ENCODE measurements at regions of chr11 and their contacts with region 1.

Region 1: GRCh38 chr11:34512840-34513681 is 533 bp downstream of the ELF5 start:
- DNase-seq: no peak

Region 2: GRCh38 chr11:34185926-34186841 is 326.9 kb before region 1 on chr11:
- in situ Hi-C with region 1: loop called (anchors 10 kb)
- DNase-seq: no peak

Region 3: DNA sequence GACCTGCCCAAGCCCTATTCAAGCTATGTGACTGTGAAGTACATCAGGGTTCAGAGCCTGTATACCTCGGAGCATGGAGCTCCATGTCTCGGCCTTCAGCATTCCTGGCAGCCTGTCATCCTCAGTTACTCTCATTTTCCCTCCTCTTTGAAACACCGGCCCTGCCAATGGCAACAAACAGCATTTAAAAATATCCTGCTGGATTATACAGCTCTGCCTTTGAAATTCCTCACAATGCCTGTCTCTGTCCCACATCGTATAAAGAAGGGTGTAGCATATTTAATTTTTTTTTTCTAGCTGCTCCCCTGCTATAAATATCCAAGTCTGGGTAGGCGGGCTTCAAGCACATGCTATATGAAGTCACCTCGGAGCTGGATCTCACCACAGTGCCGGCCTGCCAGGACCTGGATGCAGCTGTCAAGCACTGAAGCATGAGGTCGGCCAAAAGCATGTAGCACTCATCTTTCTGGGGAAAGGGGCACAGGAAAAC is 167.0 kb before region 1 on chr11:
- in situ Hi-C with region 1: no loop called
- DNase-seq: no peak

Region 4: DNA sequence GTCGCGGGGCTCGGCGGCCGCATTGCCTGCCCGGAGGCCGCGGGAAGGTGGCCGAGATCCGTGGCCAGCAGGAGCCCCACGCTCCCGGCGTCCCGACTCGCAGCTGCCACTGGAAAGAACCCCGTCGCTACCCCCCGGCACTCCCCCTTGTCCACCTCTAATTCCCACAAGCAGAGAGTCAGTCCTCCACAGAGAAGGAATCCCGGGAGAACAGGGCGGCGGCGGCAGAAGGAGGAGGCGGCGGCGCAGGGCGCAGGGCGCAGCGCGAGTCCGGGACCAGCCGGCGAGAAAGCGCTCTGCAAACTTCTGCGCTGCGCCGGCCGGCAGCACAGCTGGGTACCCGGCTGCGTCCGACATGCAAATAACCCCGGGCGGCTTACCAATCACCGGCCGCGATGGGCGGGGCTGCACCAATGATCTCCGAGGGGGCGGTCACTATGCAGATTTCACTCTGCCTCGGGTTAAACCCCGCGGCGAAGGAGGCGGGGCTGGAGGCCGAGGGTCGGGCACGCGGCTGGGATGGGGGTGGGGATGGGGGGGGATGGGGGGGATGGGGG is 155.3 kb before region 1 on chr11 and contains the start of gene ABTB2:
- in situ Hi-C with region 1: no loop called
- DNase-seq: peak; percentile 88
- total RNA-seq, gene ABTB2: 1.8 and 2.9 TPM in 2 replicates

Region 5: DNA sequence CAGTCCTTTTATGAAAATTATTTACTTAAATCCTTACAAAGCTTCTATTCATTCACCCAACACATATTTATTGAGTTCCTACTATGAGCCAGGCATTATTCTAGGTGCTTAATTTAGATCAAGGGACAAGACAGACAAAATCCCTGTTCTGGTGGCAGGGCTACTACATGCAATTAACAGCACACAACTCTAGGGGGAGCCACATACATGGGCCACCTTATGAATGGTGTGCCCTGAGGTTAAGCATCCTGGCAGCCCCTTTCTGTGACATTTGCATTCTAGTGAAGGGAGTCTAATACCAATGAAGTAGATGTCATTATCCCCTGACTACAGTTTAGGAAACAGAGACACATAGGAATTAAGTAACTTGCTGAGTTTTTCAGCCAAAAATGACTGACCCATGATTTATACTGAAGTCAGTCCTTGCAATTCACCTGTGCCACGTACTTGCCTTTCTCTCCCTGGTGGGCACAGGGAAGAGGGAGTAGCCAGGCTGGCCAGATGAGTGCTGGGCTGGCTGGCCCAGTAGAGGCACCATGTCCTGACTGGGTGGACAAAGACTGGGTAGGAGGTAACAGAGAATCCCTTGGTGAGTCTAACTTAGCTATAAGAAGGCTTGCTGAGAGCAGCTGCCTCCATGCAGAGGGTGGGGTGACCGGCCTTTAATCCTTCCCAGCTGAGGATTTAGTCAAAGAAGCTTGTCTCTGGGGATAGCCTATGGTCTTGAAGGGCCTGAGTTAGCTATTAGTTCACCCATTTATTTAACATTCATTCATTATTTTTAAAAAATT is 52.6 kb after region 1 on chr11:
- in situ Hi-C with region 1: no loop called
- DNase-seq: no peak

Measured in G401 (cell line).